ENCODE measurements at regions of chrX and their contacts with region 1.

Region 1: GRCh38 chrX:39808471-39808917 is 289.3 kb downstream of the BCOR start:
- DNase-seq: peak; percentile 20 to 41
- ATAC-seq: peak in 7 of 8 donors; percentile 41 to 80 (median 68)
- H3K4me3 ChIP-seq: no peak overlapping the region
- H3K27ac ChIP-seq: peak overlapping the region in 3 of 10 donors; percentile 13 to 53 (median 25)
- H3K4me1 ChIP-seq: peaks cover 0 to 20% (median 10%) of the 10 kb centered on the region in 9 donors
- H3K27me3 ChIP-seq: peaks cover 0 to 9% (median 0%) of the 10 kb centered on the region in 7 donors
- CTCF ChIP-seq: no peak

Region 2: GRCh38 chrX:39736216-39737211 is 72.0 kb before region 1 on chrX:
- intact Hi-C with region 1: loop called in 6 of 10 experiments (anchors 2 to 10 kb)
- DNase-seq: peak; percentile 84 to 86
- ATAC-seq: peak; percentile 87 to 97 (median 94)
- H3K4me3 ChIP-seq: no peak overlapping the region
- H3K27ac ChIP-seq: peak overlapping the region in 6 of 10 donors; percentile 30 to 75 (median 52)
- H3K4me1 ChIP-seq: peaks cover 0 to 29% (median 13%) of the 10 kb centered on the region in 9 donors
- H3K27me3 ChIP-seq: peaks cover 0 to 13% (median 0%) of the 10 kb centered on the region in 7 donors
- CTCF ChIP-seq: no peak

Region 3: GRCh38 chrX:39749720-39750119 is 58.8 kb before region 1 on chrX:
- intact Hi-C with region 1: no loop called
- DNase-seq: no peak
- ATAC-seq: no peak
- H3K4me3 ChIP-seq: no peak overlapping the region
- H3K27ac ChIP-seq: no peak overlapping the region
- H3K4me1 ChIP-seq: peaks cover 0 to 20% (median 5%) of the 10 kb centered on the region in 9 donors
- H3K27me3 ChIP-seq: no peaks in the 10 kb centered on the region
- CTCF ChIP-seq: no peak

Measured in heart right ventricle (tissue), 16 donors.